Activated CD4-positive, alpha-beta memory T cell treated with anti-CD3 and anti-CD28 coated beads, Interleukin-2, amount 10 ng/mL, durations not matched to agents 7 days and 5 days (primary cell): ENCODE measurements at regions of chr1 and their contacts with region 1.

Region 1: GRCh38 chr1:117534995-117535467 is 70.8 kb upstream of the TENT5C start:
- DNase-seq: peak; percentile 36
- H3K4me3 Mint-ChIP-seq: no peak overlapping the region
- H3K27ac Mint-ChIP-seq: no peak overlapping the region
- H3K4me1 Mint-ChIP-seq: peaks cover 3% of the 10 kb centered on the region
- H3K27me3 Mint-ChIP-seq: no peaks in the 10 kb centered on the region

Region 2: DNA sequence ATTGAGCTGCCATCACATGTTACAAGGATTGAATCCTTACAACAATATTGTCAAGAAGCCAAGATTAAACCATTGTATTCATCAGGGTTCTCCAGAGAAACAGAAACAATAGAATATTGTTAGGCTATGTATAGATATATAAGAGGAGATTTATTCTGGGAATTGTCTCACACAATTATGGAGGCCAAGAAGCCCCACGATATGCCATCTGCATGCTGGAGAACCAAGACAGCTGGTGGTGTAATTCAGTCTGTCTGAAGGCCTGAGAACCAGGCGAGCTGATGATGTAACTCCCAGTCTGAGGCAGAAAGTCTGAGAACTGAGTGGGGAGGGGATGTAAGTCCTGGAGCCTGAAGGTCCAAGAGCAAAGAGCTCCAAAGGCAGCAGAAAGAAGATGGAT is 489.4 kb before region 1 on chr1:
- CTCF ChIA-PET with region 1: no interaction called
- POLR2A ChIA-PET with region 1: no interaction called
- DNase-seq: no peak
- H3K4me3 Mint-ChIP-seq: no peak overlapping the region
- H3K27ac Mint-ChIP-seq: no peak overlapping the region
- H3K4me1 Mint-ChIP-seq: peaks cover 14% of the 10 kb centered on the region
- H3K27me3 Mint-ChIP-seq: no peaks in the 10 kb centered on the region

Region 3: DNA sequence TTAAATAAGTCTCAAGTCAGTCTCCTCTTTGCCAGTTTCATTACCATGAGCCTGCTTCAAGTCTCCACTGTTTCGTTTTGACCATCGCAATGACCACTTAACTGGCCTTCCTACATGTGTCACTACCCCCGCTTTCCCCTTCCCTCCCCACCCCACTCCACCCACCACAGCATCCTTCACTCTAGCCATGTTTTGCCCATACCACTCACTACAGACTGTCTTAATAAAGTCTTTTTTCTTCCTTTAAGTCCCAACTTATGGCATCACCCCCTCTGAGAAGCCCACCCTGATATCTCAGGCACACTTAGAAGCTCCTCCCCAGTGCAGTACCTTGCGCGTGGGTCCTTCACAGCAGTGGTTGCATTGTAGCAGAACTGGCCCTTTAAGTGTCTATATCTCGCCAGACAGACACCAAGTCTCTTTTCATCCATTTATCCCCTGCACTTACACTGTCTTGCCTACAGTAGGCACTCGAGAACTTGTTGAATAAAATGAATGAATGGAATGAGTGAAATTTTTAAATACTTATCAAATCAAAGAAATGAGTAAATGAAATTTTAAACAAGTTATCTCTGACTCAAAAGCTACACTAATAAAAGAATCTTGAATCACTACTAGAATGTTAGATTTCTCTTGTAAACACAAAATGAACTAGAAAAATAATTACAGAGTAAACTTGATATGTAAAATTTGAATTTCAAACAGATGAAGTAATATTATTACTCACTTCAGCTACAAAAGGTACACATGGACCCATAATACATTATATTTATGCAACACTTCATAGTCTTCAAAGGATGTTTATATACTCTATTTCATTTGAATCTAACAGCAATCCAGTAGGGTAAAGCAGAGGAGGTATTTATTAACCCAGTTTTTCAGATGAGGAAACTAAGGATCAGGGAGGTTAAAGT is 222.5 kb before region 1 on chr1:
- CTCF ChIA-PET with region 1: no interaction called
- POLR2A ChIA-PET with region 1: no interaction called
- DNase-seq: no peak
- H3K4me3 Mint-ChIP-seq: no peak overlapping the region
- H3K27ac Mint-ChIP-seq: no peak overlapping the region
- H3K4me1 Mint-ChIP-seq: no peaks in the 10 kb centered on the region
- H3K27me3 Mint-ChIP-seq: peaks cover 4% of the 10 kb centered on the region

Region 4: GRCh38 chr1:117436513-117436912 is 98.5 kb before region 1 on chr1:
- CTCF ChIA-PET with region 1: no interaction called
- POLR2A ChIA-PET with region 1: no interaction called
- DNase-seq: no peak
- H3K4me3 Mint-ChIP-seq: no peak overlapping the region
- H3K27ac Mint-ChIP-seq: no peak overlapping the region
- H3K4me1 Mint-ChIP-seq: no peaks in the 10 kb centered on the region
- H3K27me3 Mint-ChIP-seq: no peaks in the 10 kb centered on the region

Region 5: DNA sequence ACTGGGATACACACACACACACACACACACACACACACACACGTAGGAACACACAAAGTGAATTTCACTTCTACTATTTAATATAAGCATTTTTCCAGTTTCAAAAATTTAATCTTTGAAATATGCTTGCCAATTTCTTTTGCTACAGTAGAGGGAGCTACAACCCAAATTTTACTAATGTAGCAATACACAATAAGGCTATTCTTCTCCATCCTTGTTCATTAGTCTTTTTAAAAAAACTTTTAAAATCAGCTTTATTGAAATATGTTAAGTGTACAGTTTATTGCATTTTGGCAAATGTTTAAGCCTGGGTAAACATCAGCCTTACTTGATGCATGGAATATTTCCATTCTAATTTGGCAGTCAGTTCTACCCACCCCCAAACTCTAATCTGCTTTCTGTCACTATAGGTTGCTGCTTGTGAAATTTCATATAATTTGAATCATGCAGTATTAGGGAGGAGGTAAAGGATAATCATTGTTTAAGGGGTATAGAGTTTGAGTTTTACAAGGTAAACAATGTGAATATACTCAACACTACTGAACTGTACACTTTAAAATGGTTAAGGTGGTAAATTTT is 22.2 kb before region 1 on chr1:
- CTCF ChIA-PET with region 1: interaction called, 33 read pairs
- POLR2A ChIA-PET with region 1: interaction called, 3 read pairs
- DNase-seq: no peak
- H3K4me3 Mint-ChIP-seq: no peak overlapping the region
- H3K27ac Mint-ChIP-seq: no peak overlapping the region
- H3K4me1 Mint-ChIP-seq: no peaks in the 10 kb centered on the region
- H3K27me3 Mint-ChIP-seq: no peaks in the 10 kb centered on the region

Region 6: DNA sequence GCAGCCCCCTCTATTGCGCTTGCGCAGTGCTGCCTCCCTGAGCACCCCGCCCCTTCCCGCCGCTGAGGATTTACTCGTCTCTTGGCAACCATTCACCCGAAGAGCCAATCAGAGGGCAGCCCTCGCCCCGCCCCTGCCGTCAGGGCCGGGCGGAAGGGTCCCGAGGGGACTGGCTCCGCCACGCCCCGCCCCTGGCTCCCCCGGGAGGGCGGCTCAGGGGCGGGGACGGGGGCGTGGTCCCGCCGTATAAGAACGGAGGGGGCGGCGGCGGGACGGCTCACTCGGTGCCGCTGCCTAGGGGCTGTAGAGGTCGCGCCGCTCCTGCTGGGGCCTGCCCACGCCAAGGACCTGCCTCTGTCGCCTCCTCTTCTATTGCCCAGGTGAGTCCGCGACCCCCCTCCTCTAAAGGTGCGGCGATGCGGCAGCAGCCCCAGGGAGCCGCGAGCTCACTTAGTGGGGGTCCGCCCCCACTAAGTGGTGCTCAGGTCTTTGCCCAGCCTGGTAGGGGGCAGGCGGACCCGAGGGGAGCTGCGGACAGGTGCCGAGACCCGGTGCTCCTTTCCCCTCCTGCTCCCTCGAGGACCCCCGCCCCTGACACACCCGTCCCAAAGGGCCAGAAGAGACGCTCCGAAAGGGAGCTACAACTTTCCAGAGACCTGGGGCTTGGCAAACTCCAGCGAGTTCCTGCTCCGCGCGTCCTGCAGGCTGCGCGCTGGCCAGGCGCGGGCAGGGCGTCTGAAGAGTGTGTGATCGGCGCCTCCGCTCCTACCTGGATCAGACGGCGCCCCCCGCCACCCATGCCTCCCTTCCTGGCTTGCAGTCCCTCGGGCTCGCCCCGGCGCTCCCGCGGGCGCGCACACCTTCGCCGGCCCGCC is 71.0 kb after region 1 on chr1 and contains the start of gene TENT5C:
- CTCF ChIA-PET with region 1: interaction called, 16 read pairs
- POLR2A ChIA-PET with region 1: interaction called, 14 read pairs
- DNase-seq: peak; percentile 99
- H3K4me3 Mint-ChIP-seq: peak within 1 kb of the TSS; percentile 97
- H3K27ac Mint-ChIP-seq: peak within 1 kb of the TSS; percentile 95
- H3K4me1 Mint-ChIP-seq: peaks cover 46% of the 10 kb centered on the region
- H3K27me3 Mint-ChIP-seq: peaks cover 17% of the 10 kb centered on the region
- total RNA-seq, gene TENT5C: 64.5 to 66.1 TPM

Region 7: GRCh38 chr1:117654493-117655219 is 119.6 kb after region 1 on chr1:
- CTCF ChIA-PET with region 1: interaction called, 11 read pairs
- POLR2A ChIA-PET with region 1: interaction called, 7 read pairs
- DNase-seq: no peak
- H3K4me3 Mint-ChIP-seq: peak overlapping the region; percentile 29
- H3K27ac Mint-ChIP-seq: peak overlapping the region; percentile 91
- H3K4me1 Mint-ChIP-seq: peaks cover 86% of the 10 kb centered on the region
- H3K27me3 Mint-ChIP-seq: no peaks in the 10 kb centered on the region

Region 8: GRCh38 chr1:117674521-117675397 is 139.7 kb after region 1 on chr1:
- CTCF ChIA-PET with region 1: interaction called, 112 read pairs
- POLR2A ChIA-PET with region 1: interaction called, 10 read pairs
- DNase-seq: peak; percentile 71
- H3K4me3 Mint-ChIP-seq: no peak overlapping the region
- H3K27ac Mint-ChIP-seq: no peak overlapping the region
- H3K4me1 Mint-ChIP-seq: peaks cover 31% of the 10 kb centered on the region
- H3K27me3 Mint-ChIP-seq: no peaks in the 10 kb centered on the region

Region 9: DNA sequence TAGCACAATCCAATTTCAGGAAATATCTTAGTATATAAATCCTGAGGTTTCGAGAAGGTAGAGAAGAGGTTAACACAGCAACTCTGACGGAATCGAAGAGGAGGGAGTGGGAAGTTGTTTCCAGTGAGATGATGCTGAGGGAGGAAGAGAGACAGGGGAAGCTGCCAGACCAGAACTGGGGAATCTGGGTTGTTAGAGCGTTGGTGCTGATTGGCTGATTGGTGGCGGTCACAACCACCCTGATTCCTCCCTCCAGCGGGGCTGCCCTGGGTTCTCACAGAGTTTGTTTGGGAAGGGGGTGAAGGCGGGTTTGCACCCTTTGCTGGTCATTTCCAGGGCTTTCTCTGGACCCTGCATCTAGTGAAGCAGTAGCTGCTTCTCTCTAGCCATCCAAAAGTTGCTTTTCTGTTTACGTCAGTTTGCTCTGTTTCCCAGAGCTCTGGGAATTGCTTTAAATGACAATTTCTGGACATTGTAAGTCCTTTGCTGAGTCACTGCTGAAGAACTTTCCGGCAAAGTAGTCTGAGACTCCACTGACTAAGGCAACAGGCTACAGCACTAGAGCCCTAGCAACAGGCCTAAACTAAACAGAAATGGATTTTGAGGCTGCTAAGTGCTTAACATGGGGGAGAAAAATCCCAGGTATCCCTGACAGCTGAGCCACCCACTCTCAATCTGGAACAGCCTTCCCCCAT is 160.9 kb after region 1 on chr1:
- CTCF ChIA-PET with region 1: interaction called, 17 read pairs
- POLR2A ChIA-PET with region 1: no interaction called
- DNase-seq: no peak
- H3K4me3 Mint-ChIP-seq: no peak overlapping the region
- H3K27ac Mint-ChIP-seq: no peak overlapping the region
- H3K4me1 Mint-ChIP-seq: peaks cover 26% of the 10 kb centered on the region
- H3K27me3 Mint-ChIP-seq: peaks cover 3% of the 10 kb centered on the region

Region 10: GRCh38 chr1:117895482-117896114 is 360.6 kb after region 1 on chr1:
- CTCF ChIA-PET with region 1: interaction called, 13 read pairs
- POLR2A ChIA-PET with region 1: no interaction called
- DNase-seq: peak; percentile 65
- H3K4me3 Mint-ChIP-seq: no peak overlapping the region
- H3K27ac Mint-ChIP-seq: no peak overlapping the region
- H3K4me1 Mint-ChIP-seq: no peaks in the 10 kb centered on the region
- H3K27me3 Mint-ChIP-seq: no peaks in the 10 kb centered on the region